ENCODE measurements at regions of chr5 and their contacts with region 1.

Region 1: DNA sequence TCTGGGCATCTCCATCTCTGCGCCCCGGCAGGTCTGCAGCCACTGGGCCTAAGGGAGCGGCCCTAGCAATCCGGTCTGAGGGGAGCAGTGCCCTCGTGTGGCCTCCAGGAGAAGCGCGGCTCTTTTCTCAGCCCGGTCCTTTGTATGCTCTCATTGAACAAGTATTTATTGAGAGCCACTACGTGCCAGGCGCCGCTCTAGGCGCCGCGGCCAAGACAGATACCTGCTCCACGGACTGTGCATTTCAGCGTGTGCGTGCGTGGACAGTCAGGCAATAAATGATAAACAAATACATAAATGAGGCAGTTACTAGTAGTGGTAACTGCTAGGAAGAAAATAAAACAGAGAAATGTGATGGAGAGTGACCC is 2.3 kb upstream of the SLC4A9 start:
- DNase-seq: peak; percentile 88
- H3K4me3 ChIP-seq: peak overlapping the region; percentile 5
- H3K27ac ChIP-seq: no peak overlapping the region
- H3K4me1 ChIP-seq: no peaks in the 10 kb centered on the region
- H3K27me3 ChIP-seq: no peaks in the 10 kb centered on the region
- CTCF ChIP-seq: peak; percentile 86

Region 2: DNA sequence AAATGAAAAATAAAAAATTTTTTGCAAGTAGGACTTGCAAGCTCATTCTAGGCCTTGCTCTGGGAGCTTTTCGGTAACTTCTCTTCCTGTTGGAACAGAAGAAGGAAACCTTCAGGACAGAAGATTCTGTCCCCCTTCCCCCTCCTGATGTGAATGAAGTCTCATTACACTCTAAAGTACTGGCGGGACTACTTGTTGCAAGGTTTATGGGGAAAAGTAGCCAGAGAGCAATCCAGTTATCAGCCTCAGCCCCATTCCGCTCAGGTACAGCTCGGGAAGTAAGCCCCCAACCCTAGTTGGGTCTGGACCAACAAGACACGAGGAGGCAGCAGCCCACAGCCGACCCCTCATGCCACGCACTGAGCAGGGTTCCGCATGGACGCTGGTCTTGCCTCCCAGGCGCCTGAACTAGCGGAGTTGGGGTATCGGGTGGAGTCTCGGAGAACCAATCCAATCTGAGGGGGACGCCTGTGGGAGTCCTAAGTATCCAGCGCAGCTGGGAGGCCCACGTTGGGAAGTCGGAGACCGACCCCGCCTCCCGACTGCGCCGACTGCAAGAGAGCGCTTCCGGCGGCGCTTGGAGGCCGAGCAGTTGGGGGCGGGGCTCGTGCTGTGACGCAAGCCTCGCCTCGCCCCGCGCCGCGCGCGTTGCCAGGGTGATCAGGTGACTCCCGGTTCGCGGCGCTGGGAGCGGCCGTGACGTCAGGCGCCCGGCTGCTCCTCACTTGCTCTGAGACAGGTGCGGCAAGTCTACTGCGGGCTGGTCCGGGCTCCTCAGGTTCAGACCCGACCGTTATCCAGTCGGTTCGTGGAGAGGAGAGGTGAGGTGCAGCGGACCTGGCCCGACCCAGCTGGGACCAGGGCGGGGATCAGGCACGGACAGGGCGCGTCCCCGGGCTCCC is 183.0 kb before region 1 on chr5 and contains the start of gene CYSTM1:
- intact Hi-C with region 1: loop called (anchors 10 kb)
- DNase-seq: peak; percentile 98
- H3K4me3 ChIP-seq: peak within 1 kb of the TSS; percentile 82
- H3K27ac ChIP-seq: peak within 1 kb of the TSS; percentile 97
- H3K4me1 ChIP-seq: no peaks in the 10 kb centered on the region
- H3K27me3 ChIP-seq: no peaks in the 10 kb centered on the region
- CTCF ChIP-seq: no peak
- total RNA-seq, gene CYSTM1: 205 TPM